Gastrocnemius medialis (tissue), 4 donors: ENCODE measurements at regions of chr3 and their contacts with region 1.

Region 1: GRCh38 chr3:196251918-196252317 is 35.6 kb downstream of the SLC51A start:
- DNase-seq: no peak
- ATAC-seq: no peak
- H3K4me3 ChIP-seq: no peak overlapping the region
- H3K27ac ChIP-seq: no peak overlapping the region
- H3K4me1 ChIP-seq: peaks cover 3 to 5% of the 10 kb centered on the region in 2 donors
- H3K27me3 ChIP-seq: no peaks in the 10 kb centered on the region
- CTCF ChIP-seq: no peak
- POLR2A ChIP-seq: no peak

Region 2: DNA sequence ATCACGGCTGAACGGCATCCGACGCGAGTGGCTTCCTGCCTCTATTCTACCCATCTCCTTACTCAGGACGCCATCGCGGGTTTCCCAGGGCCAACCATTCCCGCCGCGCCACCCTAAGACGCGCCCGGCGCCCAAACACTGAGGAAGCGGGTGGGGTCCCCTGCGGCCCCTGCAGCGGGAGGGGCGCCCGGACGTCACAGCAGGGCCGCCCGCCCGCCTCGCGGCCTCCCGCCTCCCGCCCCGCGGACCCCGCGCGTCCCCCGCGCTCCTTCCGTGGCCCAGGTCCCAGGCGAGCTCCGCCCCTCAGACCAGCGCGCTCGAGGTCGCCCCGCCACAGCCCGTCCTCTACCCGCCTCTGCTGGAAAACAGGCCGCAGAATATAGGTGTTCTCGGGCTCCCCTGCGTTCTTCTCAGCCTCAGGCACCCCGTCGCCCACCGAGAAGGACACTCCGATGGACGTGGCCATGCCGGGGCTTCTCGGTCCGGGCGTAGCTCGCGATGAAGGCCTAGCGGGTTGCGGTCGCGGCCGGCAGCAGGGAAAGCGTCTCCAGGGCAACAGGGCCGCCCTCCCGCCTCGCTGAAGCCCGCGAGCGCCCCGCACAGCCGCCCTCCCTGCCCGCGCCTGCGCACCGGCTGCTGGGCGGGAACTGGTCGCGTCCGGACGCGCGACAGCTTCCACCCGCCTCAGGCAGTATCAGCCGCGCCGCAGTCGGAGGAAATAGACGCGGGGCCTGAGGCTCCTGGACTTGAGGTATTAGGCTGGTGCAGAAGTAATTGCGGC is 66.0 kb after region 1 on chr3 and contains the start of gene DYNLT2B:
- in situ Hi-C with region 1: loop called in 1 of 4 experiments (anchors 10 kb)
- intact Hi-C with region 1: loop called (anchors 5 kb)
- DNase-seq: peak; percentile 65 to 80
- ATAC-seq: peak; percentile 93 to 95
- H3K4me3 ChIP-seq: peak within 1 kb of the TSS; percentile 79 to 96 (median 86)
- H3K27ac ChIP-seq: peak within 1 kb of the TSS; percentile 83 to 91 (median 86)
- H3K4me1 ChIP-seq: peaks cover 0 to 5% of the 10 kb centered on the region in 2 donors
- H3K27me3 ChIP-seq: no peaks in the 10 kb centered on the region
- CTCF ChIP-seq: no peak
- POLR2A ChIP-seq: peak; percentile 48 to 56
- total RNA-seq, gene DYNLT2B: 2.3 to 3.3 TPM in 2 of 4 donors, not detected in the others

Region 3: DNA sequence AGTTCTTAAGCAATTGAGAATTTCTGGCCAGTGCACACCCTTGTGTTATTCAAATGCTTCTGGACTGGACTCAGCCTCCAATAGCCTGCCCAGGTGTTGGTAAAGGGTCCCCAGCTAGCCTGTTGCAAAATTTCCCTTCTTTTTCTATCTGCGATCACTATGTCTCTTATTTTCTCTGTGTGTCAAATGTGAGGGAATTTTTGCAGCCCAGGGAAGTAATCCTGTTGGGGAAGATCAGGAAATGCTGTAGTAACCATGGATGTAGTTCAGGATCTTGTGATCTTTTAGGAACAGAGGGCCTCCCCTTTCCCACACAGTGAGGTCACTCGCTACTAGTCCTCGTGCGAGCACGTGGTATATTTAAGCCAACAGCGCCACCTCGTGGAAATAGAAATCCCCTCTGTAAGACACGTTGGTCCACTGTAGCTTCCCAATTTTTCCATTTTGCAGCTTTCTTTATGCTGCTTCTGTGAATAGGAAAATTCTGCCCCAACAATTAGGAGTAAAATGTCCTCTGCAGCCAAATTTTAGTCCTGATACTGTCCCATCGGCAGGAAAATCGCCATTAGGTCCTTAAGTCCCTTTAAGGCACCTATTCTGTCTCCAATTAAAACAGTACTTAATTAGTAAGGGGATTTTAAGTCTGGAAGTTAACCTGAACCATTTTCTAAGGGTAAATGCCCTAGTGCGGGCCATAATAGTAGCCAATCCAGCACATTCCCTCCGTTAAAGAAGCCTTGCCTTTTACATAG is 267.2 kb after region 1 on chr3:
- in situ Hi-C with region 1: loop called (anchors 5 to 10 kb)
- intact Hi-C with region 1: loop called (anchors 2 kb)
- DNase-seq: peak; percentile 56 to 71
- ATAC-seq: peak; percentile 60 to 66
- H3K4me3 ChIP-seq: no peak overlapping the region
- H3K27ac ChIP-seq: peak overlapping the region; percentile 7 to 50 (median 25)
- H3K4me1 ChIP-seq: peaks cover 19 to 23% of the 10 kb centered on the region in 2 donors
- H3K27me3 ChIP-seq: no peaks in the 10 kb centered on the region
- CTCF ChIP-seq: peak; percentile 69 to 82 (median 77)
- POLR2A ChIP-seq: no peak

Region 4: GRCh38 chr3:196528639-196529233 is 276.8 kb after region 1 on chr3:
- in situ Hi-C with region 1: loop called (anchors 5 to 10 kb)
- intact Hi-C with region 1: no loop called
- DNase-seq: peak; percentile 27 to 41
- ATAC-seq: peak; percentile 90 to 95
- H3K4me3 ChIP-seq: peak overlapping the region; percentile 37 to 53 (median 44)
- H3K27ac ChIP-seq: peak overlapping the region in 1 of 4 donors; percentile 32
- H3K4me1 ChIP-seq: no peaks in the 10 kb centered on the region
- H3K27me3 ChIP-seq: peaks cover 0 to 5% (median 0%) of the 10 kb centered on the region in 3 donors
- CTCF ChIP-seq: peak; percentile 62 to 90 (median 75)
- POLR2A ChIP-seq: no peak

Region 5: DNA sequence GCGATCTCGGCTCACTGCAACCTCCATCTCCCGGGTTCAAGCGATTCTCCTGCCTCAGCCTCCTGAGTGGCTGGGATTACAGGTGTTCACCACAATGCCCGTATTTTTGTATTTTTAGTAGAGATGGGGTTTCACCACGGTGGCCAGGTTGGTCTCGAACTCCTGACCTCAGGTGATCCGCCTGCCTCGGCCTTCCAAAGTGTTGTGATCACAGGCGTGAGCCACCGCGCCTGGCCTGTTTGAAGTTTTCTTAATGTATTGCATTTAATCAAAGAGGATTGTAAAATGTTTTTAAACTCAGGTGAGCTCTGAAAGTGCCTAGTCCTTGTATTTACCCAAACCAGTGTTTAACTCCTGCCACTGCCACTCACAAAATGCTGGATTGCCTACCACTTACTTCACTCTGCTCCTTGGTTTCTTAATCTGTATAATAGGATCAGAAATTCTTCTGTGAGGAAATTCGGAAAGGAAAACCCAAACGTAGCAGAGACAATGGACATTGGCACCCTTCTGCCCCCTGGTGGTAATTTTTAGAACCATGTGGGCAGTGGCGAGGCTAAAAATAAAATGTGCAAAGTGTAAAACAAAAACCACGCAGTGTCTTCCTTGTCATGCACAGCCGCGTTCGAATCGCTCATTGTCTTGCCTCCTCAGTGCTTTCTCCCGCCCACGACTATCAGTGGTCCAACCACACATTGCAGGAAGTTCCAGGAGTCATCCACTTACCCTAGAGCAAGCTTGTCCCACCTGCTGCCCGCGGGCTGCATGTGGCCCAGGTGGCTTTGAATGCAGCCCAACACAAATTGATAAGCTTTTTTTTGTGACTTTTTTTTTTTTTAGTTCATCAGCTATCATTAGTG is 432.9 kb after region 1 on chr3:
- in situ Hi-C with region 1: no loop called
- intact Hi-C with region 1: loop called (anchors 10 kb)
- DNase-seq: peak; percentile 16 to 36
- ATAC-seq: peak; percentile 55 to 85
- H3K4me3 ChIP-seq: peak overlapping the region in 2 of 4 donors; percentile 22 to 27
- H3K27ac ChIP-seq: no peak overlapping the region
- H3K4me1 ChIP-seq: peaks cover 0 to 6% of the 10 kb centered on the region in 2 donors
- H3K27me3 ChIP-seq: no peaks in the 10 kb centered on the region
- CTCF ChIP-seq: peak; percentile 81 to 91 (median 85)
- POLR2A ChIP-seq: no peak